ENCODE measurements at regions of chr1 and their contacts with region 1.

Region 1: DNA sequence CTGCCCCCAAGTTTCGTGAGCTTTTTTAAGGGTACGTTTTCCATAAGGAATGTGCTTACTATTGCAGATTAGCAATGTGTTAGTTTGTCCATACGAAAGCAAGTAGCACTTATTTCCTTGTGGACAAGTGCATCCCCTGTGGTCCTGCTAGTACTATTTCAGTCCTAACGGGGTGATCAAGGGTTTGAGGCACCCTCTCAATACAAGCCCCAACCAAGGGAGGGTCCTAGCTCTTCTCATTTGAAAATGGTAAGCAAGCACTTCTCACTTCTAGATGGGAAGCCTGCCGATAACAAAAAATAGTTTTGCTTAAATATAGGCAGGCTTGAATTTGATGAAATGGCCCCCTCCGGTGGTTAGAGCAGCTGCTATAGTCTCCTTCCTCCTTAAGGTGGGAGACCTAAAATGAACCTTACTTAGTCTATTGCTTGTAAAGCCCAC is 64.0 kb upstream of the HMCN1 start:
- DNase-seq: peak; percentile 55
- ATAC-seq: peak; percentile 83
- H3K4me3 ChIP-seq: no peak overlapping the region
- H3K27ac ChIP-seq: no peak overlapping the region
- H3K4me1 ChIP-seq: no peaks in the 10 kb centered on the region
- H3K27me3 ChIP-seq: no peaks in the 10 kb centered on the region
- CTCF ChIP-seq: peak; percentile 72
- POLR2A ChIP-seq: no peak
- RAD21 ChIP-seq: peak; percentile 80

Region 2: GRCh38 chr1:184982002-184982954 is 687.9 kb before region 1 on chr1:
- CTCF ChIA-PET with region 1: no interaction called
- POLR2A ChIA-PET with region 1: no interaction called
- dilution Hi-C with region 1: no loop called
- in situ Hi-C with region 1: no loop called
- intact Hi-C with region 1: loop called (anchors 5 kb)
- DNase-seq: peak; percentile 80
- ATAC-seq: peak; percentile 100
- H3K4me3 ChIP-seq: no peak overlapping the region
- H3K27ac ChIP-seq: no peak overlapping the region
- H3K4me1 ChIP-seq: no peaks in the 10 kb centered on the region
- H3K27me3 ChIP-seq: no peaks in the 10 kb centered on the region
- CTCF ChIP-seq: peak; percentile 94
- POLR2A ChIP-seq: no peak
- RAD21 ChIP-seq: peak; percentile 94

Region 3: GRCh38 chr1:185156854-185157598 is 513.2 kb before region 1 on chr1 and contains the starts of genes SWT1 and TRMT1L:
- CTCF ChIA-PET with region 1: no interaction called
- POLR2A ChIA-PET with region 1: no interaction called
- dilution Hi-C with region 1: no loop called
- in situ Hi-C with region 1: no loop called
- intact Hi-C with region 1: loop called (anchors 5 kb)
- DNase-seq: peak; percentile 99
- ATAC-seq: peak; percentile 96
- H3K4me3 ChIP-seq: peak within 1 kb of the TSS; percentile 70
- H3K27ac ChIP-seq: peak within 1 kb of the TSS; percentile 90
- H3K4me1 ChIP-seq: peaks cover 2% of the 10 kb centered on the region; the same call in 1 of the 2 replicates
- H3K27me3 ChIP-seq: no peaks in the 10 kb centered on the region
- CTCF ChIP-seq: no peak
- POLR2A ChIP-seq: peak; percentile 93
- RAD21 ChIP-seq: no peak
- total RNA-seq, gene SWT1: 2.7 and 4.2 TPM in 2 replicates
- total RNA-seq, gene TRMT1L: 21.9 and 25.3 TPM in 2 replicates

Region 4: GRCh38 chr1:185238447-185238846 is 431.8 kb before region 1 on chr1:
- CTCF ChIA-PET with region 1: interaction called, 10 read pairs
- POLR2A ChIA-PET with region 1: no interaction called
- dilution Hi-C with region 1: no loop called
- in situ Hi-C with region 1: no loop called
- intact Hi-C with region 1: loop called (anchors 2 kb)
- DNase-seq: peak; percentile 47
- ATAC-seq: peak; percentile 49; the same call in 1 of the 2 replicates
- H3K4me3 ChIP-seq: no peak overlapping the region
- H3K27ac ChIP-seq: no peak overlapping the region
- H3K4me1 ChIP-seq: no peaks in the 10 kb centered on the region
- H3K27me3 ChIP-seq: no peaks in the 10 kb centered on the region
- CTCF ChIP-seq: peak; percentile 59
- POLR2A ChIP-seq: no peak
- RAD21 ChIP-seq: peak; percentile 63

Region 5: DNA sequence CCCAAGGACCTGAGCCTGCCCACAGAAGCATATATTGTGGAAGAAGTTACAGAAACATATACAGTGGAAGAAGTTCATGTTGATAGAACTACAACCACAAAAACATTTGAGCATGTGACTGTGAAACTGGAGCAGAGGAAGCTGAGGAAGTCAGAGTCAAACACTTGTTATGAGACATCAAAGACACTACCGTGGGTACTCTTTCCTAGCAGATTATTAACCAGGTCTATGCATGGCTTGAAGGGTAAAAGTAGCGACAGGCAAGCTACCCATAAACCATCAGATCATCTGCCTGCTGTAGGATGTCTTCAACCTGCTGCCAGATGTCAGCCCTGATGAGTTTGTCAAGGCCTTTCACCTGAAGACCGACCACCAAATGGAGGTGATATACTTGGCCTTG is 389.0 kb before region 1 on chr1:
- CTCF ChIA-PET with region 1: no interaction called
- POLR2A ChIA-PET with region 1: no interaction called
- dilution Hi-C with region 1: no loop called
- in situ Hi-C with region 1: no loop called
- intact Hi-C with region 1: no loop called
- DNase-seq: peak; percentile 24
- ATAC-seq: no peak
- H3K4me3 ChIP-seq: no peak overlapping the region
- H3K27ac ChIP-seq: no peak overlapping the region
- H3K4me1 ChIP-seq: peaks cover 9% of the 10 kb centered on the region
- H3K27me3 ChIP-seq: no peaks in the 10 kb centered on the region
- CTCF ChIP-seq: no peak
- POLR2A ChIP-seq: no peak
- RAD21 ChIP-seq: no peak

Region 6: GRCh38 chr1:185453496-185454192 is 216.6 kb before region 1 on chr1:
- CTCF ChIA-PET with region 1: no interaction called
- POLR2A ChIA-PET with region 1: no interaction called
- dilution Hi-C with region 1: no loop called
- in situ Hi-C with region 1: no loop called
- intact Hi-C with region 1: loop called (anchors 1 kb)
- DNase-seq: peak; percentile 92
- ATAC-seq: peak; percentile 97
- H3K4me3 ChIP-seq: no peak overlapping the region
- H3K27ac ChIP-seq: peak overlapping the region; percentile 61; the same call in 1 of the 2 replicates
- H3K4me1 ChIP-seq: peaks cover 5% of the 10 kb centered on the region
- H3K27me3 ChIP-seq: peaks cover 3% of the 10 kb centered on the region; the same call in 1 of the 2 replicates
- CTCF ChIP-seq: no peak
- POLR2A ChIP-seq: no peak
- RAD21 ChIP-seq: no peak

Region 7: DNA sequence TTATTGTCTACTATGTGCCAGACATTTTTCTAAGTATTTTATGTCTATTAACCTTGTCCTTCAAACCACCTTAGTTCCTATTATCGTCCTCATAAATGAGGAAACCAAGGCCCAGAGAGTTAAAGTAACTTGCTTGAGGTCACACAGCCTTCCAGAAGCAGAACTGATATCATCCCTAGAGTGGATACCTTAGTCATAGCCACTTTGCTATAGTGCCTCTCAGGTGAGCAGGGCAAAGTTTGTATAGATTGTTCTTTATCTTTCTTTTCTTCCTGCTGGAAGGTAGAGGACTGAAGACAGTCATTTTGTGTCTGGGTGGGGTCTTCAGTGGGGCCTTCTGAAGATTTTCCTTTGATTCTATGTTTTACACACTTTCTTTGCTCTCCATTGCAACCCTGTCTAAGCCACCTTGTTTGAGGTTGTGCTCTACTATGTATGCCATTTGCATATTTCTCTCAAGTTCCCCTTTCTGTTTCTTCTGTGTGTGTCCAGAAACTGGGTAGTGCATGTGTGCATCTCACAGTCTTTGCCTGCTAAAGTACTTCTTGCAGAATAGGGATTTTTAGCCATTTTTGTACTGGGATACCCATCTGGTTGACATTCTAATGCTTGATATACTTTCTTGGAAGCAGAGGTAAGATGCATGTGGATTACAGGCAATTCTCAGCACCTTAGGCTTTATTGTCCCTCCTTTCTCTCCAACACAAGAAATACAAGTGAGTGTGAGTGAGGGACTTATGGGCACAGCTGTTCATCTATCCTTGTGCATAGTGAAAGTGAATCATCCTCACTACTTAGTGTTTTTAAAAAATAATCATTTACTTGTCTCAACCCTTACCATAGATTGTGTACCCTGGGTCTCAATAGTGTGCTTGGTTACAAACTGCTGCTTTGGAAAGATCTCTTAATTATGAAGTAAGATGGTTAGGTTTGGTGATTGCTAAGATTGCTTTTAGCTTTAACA is 143.6 kb before region 1 on chr1:
- CTCF ChIA-PET with region 1: no interaction called
- POLR2A ChIA-PET with region 1: no interaction called
- dilution Hi-C with region 1: no loop called
- in situ Hi-C with region 1: no loop called
- intact Hi-C with region 1: no loop called
- DNase-seq: no peak
- ATAC-seq: no peak
- H3K4me3 ChIP-seq: no peak overlapping the region
- H3K27ac ChIP-seq: no peak overlapping the region
- H3K4me1 ChIP-seq: no peaks in the 10 kb centered on the region
- H3K27me3 ChIP-seq: no peaks in the 10 kb centered on the region; the same call in none of the 2 replicates
- CTCF ChIP-seq: no peak
- POLR2A ChIP-seq: no peak
- RAD21 ChIP-seq: no peak

Region 8: GRCh38 chr1:185864889-185865288 is 194.7 kb after region 1 on chr1:
- CTCF ChIA-PET with region 1: no interaction called
- POLR2A ChIA-PET with region 1: no interaction called
- dilution Hi-C with region 1: no loop called
- in situ Hi-C with region 1: no loop called
- intact Hi-C with region 1: no loop called
- DNase-seq: peak; percentile 97
- ATAC-seq: peak; percentile 82
- H3K4me3 ChIP-seq: no peak overlapping the region
- H3K27ac ChIP-seq: 0 out of 2 replicates have a peak overlapping the region, but pooled peaks have one; percentile 10
- H3K4me1 ChIP-seq: peaks cover 4% of the 10 kb centered on the region; the same call in 1 of the 2 replicates
- H3K27me3 ChIP-seq: no peaks in the 10 kb centered on the region
- CTCF ChIP-seq: no peak
- POLR2A ChIP-seq: no peak
- RAD21 ChIP-seq: peak; percentile 11; the same call in 1 of the 2 replicates

Measured in IMR-90 (cell line).